Panc1 (cell line): ENCODE measurements at regions of chr7 and their contacts with region 1.

Region 1: GRCh38 chr7:7416031-7416858 is 119.4 kb downstream of the COL28A1 start:
- DNase-seq: no peak
- ATAC-seq: peak; percentile 85
- H3K4me3 ChIP-seq: no peak overlapping the region
- H3K27ac ChIP-seq: no peak overlapping the region
- H3K4me1 ChIP-seq: no peaks in the 10 kb centered on the region
- H3K27me3 ChIP-seq: no peaks in the 10 kb centered on the region
- CTCF ChIP-seq: no peak

Region 2: GRCh38 chr7:7182156-7183060 is 233.8 kb before region 1 on chr7 and contains the start of gene C1GALT1:
- CTCF ChIA-PET with region 1: no interaction called
- POLR2A ChIA-PET with region 1: no interaction called
- in situ Hi-C with region 1: no loop called
- intact Hi-C with region 1: loop called (anchors 10 kb)
- DNase-seq: peak; percentile 94
- ATAC-seq: peak; percentile 97
- H3K4me3 ChIP-seq: peak within 1 kb of the TSS; percentile 83 to 93
- H3K27ac ChIP-seq: peak within 1 kb of the TSS; percentile 94
- H3K4me1 ChIP-seq: peaks cover 23% of the 10 kb centered on the region
- H3K27me3 ChIP-seq: no peaks in the 10 kb centered on the region
- CTCF ChIP-seq: peak; percentile 63
- total RNA-seq, gene C1GALT1: 54.5 TPM

Region 3: DNA sequence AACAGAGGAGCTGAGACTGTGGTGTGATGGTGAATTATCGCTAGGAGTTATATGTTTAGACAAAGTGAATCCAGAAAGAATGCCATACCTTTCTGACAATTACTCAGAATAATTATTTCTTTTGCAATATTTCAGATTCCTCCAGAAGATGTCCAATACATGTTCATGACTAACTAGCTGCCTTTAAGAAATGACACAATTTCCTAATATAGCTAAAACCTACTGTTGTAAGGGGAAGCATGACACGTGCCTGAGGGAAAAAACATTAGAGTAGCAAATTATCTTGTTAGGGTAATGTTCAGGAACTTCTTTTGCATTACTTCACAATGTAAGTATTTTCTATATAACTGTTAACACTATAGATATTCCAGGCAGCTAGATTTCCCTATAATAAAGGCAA is 30.8 kb before region 1 on chr7:
- CTCF ChIA-PET with region 1: no interaction called
- POLR2A ChIA-PET with region 1: no interaction called
- in situ Hi-C with region 1: no loop called
- intact Hi-C with region 1: no loop called
- DNase-seq: no peak
- ATAC-seq: no peak
- H3K4me3 ChIP-seq: no peak overlapping the region
- H3K27ac ChIP-seq: no peak overlapping the region
- H3K4me1 ChIP-seq: no peaks in the 10 kb centered on the region
- H3K27me3 ChIP-seq: no peaks in the 10 kb centered on the region
- CTCF ChIP-seq: no peak

Region 4: DNA sequence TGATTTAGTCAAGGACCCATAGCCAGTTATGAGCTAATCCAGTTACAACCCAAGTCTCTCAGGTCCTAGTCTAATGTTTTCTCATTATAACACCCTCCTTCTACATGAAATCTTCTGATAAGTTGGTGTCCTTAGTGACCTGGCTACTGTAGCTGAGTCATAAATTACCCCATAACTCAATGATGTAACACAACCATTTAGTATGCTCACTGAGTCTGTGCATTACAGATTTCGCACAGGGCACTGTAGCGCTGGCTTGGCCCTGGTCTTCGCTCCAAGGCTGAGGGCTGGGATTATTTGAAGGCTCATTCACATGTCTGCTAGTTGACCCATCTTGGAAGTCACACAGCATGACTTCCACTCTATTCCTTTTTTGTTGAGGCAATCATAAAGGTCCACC is 516.3 kb after region 1 on chr7:
- CTCF ChIA-PET with region 1: no interaction called
- POLR2A ChIA-PET with region 1: no interaction called
- in situ Hi-C with region 1: no loop called
- intact Hi-C with region 1: no loop called
- DNase-seq: no peak
- ATAC-seq: no peak
- H3K4me3 ChIP-seq: no peak overlapping the region
- H3K27ac ChIP-seq: no peak overlapping the region
- H3K4me1 ChIP-seq: no peaks in the 10 kb centered on the region
- H3K27me3 ChIP-seq: no peaks in the 10 kb centered on the region; the same call in 1 of the 2 replicates
- CTCF ChIP-seq: no peak